ENCODE measurements at regions of chr11 and their contacts with region 1.

Region 1: GRCh38 chr11:57426929-57427726 is at the start of gene SLC43A3:
- DNase-seq: peak; percentile 60
- H3K4me3 Mint-ChIP-seq: peak within 1 kb of the TSS; percentile 90
- H3K27ac Mint-ChIP-seq: peak within 1 kb of the TSS; percentile 80
- H3K4me1 Mint-ChIP-seq: peaks cover 56% of the 10 kb centered on the region
- H3K27me3 Mint-ChIP-seq: peaks cover 3% of the 10 kb centered on the region
- total RNA-seq, gene SLC43A3: 181 and 184 TPM in 2 replicates

Region 2: GRCh38 chr11:57324886-57325734 is 102.0 kb before region 1 on chr11 and contains the start of gene TNKS1BP1:
- intact Hi-C with region 1: loop called (anchors 1 kb)
- DNase-seq: peak; percentile 86
- H3K4me3 Mint-ChIP-seq: peak within 1 kb of the TSS; percentile 85
- H3K27ac Mint-ChIP-seq: peak within 1 kb of the TSS; percentile 91
- H3K4me1 Mint-ChIP-seq: peaks cover 57% of the 10 kb centered on the region
- H3K27me3 Mint-ChIP-seq: no peaks in the 10 kb centered on the region
- total RNA-seq, gene TNKS1BP1: 22.1 and 24.3 TPM in 2 replicates

Region 3: GRCh38 chr11:57406337-57406904 is 20.7 kb before region 1 on chr11:
- intact Hi-C with region 1: loop called (anchors 1 kb)
- DNase-seq: no peak
- H3K4me3 Mint-ChIP-seq: peak overlapping the region; percentile 20
- H3K27ac Mint-ChIP-seq: peak overlapping the region; percentile 91
- H3K4me1 Mint-ChIP-seq: peaks cover 35% of the 10 kb centered on the region
- H3K27me3 Mint-ChIP-seq: no peaks in the 10 kb centered on the region

Region 4: GRCh38 chr11:57480409-57481137 is 53.4 kb after region 1 on chr11:
- intact Hi-C with region 1: loop called (anchors 2 kb)
- DNase-seq: peak; percentile 62
- H3K4me3 Mint-ChIP-seq: no peak overlapping the region
- H3K27ac Mint-ChIP-seq: no peak overlapping the region
- H3K4me1 Mint-ChIP-seq: peaks cover 12% of the 10 kb centered on the region
- H3K27me3 Mint-ChIP-seq: peaks cover 49% of the 10 kb centered on the region

Region 5: DNA sequence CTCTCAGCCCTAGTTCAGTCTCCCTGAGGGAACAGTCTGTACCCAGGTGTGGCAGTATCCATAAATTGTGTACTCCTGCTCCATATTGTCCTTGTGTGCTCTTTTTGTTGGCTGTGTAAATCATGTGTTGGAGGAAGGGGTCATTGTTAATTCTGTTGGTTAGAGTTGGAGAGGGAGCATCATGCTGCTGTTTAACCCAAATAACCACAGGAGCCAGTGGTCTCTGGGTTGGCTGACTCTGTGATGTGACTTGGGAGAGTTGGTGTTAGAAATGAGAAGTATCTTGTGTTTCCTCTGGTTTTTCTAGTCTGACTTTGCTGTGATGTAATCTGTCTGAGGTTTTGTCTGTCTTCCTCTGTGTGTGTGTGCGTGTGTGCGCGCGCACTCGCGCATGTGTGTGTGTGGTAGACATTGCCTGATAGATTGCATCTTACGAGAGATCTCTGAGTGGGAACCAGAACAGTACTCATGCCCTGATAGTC is 365.0 kb after region 1 on chr11:
- intact Hi-C with region 1: loop called (anchors 1 kb)
- DNase-seq: peak; percentile 84
- H3K4me3 Mint-ChIP-seq: peak overlapping the region; percentile 53
- H3K27ac Mint-ChIP-seq: peak overlapping the region; percentile 86
- H3K4me1 Mint-ChIP-seq: peaks cover 50% of the 10 kb centered on the region
- H3K27me3 Mint-ChIP-seq: peaks cover 1% of the 10 kb centered on the region